HepG2 (cell line): ENCODE measurements at regions of chr19 and their contacts with region 1.

Region 1: GRCh38 chr19:47348819-47349795 is at the start of gene DHX34:
- DNase-seq: peak; percentile 96
- ATAC-seq: peak; percentile 91
- H3K4me3 ChIP-seq: peak within 1 kb of the TSS; percentile 89 to 93 (median 90)
- H3K27ac ChIP-seq: peak within 1 kb of the TSS; percentile 58
- H3K4me1 ChIP-seq: peaks cover 57% of the 10 kb centered on the region
- H3K27me3 ChIP-seq: no peaks in the 10 kb centered on the region; a peak in 1 of 5 replicates
- CTCF ChIP-seq: peak; percentile 98
- EP300 ChIP-seq: no peak
- POLR2A ChIP-seq: peak; percentile 55 to 89; a peak in 3 of 4 replicates
- RAD21 ChIP-seq: no peak
- total RNA-seq, gene DHX34: 8.0 and 12.0 TPM in 2 replicates

Region 2: GRCh38 chr19:47305309-47305751 is 43.8 kb before region 1 on chr19:
- CTCF ChIA-PET with region 1: no interaction called
- POLR2A ChIA-PET with region 1: interaction called, 7 read pairs
- in situ Hi-C with region 1: no loop called
- intact Hi-C with region 1: loop called (anchors 2 kb)
- DNase-seq: peak; percentile 81
- ATAC-seq: peak; percentile 76
- H3K4me3 ChIP-seq: peak overlapping the region in 1 of 3 experiments; percentile 13; a peak in 1 of 6 replicates
- H3K27ac ChIP-seq: peak overlapping the region; percentile 32
- H3K4me1 ChIP-seq: peaks cover 27% of the 10 kb centered on the region
- H3K27me3 ChIP-seq: 0 out of 5 replicates have a peak, but pooled peaks cover 0 to 1% of the 10 kb centered on the region in 2 experiments
- CTCF ChIP-seq: peak; percentile 91
- EP300 ChIP-seq: peak in 1 of 2 experiments; percentile 13; a peak in 1 of 4 replicates
- POLR2A ChIP-seq: no peak
- RAD21 ChIP-seq: peak; percentile 35; the same call in 1 of the 2 replicates

Region 3: GRCh38 chr19:47315125-47315821 is 33.8 kb before region 1 on chr19:
- CTCF ChIA-PET with region 1: no interaction called
- POLR2A ChIA-PET with region 1: interaction called, 12 read pairs
- in situ Hi-C with region 1: no loop called
- intact Hi-C with region 1: no loop called
- DNase-seq: peak; percentile 97
- ATAC-seq: peak; percentile 90
- H3K4me3 ChIP-seq: peak overlapping the region in 1 of 3 experiments; percentile 8; a peak in 1 of 6 replicates
- H3K27ac ChIP-seq: peak overlapping the region; percentile 77
- H3K4me1 ChIP-seq: peaks cover 70% of the 10 kb centered on the region
- H3K27me3 ChIP-seq: no peaks in the 10 kb centered on the region
- CTCF ChIP-seq: peak; percentile 23; the same call in 1 of the 2 replicates
- EP300 ChIP-seq: peak; percentile 88 to 93
- POLR2A ChIP-seq: 0 out of 4 replicates have a peak, but pooled peaks of 1 of the 2 experiments have one; percentile 26
- RAD21 ChIP-seq: no peak